Activated CD8-positive, alpha-beta memory T cell treated with anti-CD3 and anti-CD28 coated beads, Interleukin-2, amount 10 ng/mL, durations not matched to agents 7 days and 5 days (primary cell): ENCODE measurements at regions of chr16 and their contacts with region 1.

Region 1: GRCh38 chr16:28218104-28218503 is 6.3 kb upstream of the XPO6 start:
- DNase-seq: peak; percentile 73
- ATAC-seq: peak; percentile 99
- H3K4me3 Mint-ChIP-seq: no peak overlapping the region
- H3K27ac Mint-ChIP-seq: no peak overlapping the region
- H3K4me1 Mint-ChIP-seq: peaks cover 5% of the 10 kb centered on the region
- H3K27me3 Mint-ChIP-seq: no peaks in the 10 kb centered on the region

Region 2: GRCh38 chr16:27972500-27972899 is 245.6 kb before region 1 on chr16:
- CTCF ChIA-PET with region 1: interaction called, 10 read pairs
- DNase-seq: peak; percentile 74
- ATAC-seq: peak; percentile 93
- H3K4me3 Mint-ChIP-seq: no peak overlapping the region
- H3K27ac Mint-ChIP-seq: no peak overlapping the region
- H3K4me1 Mint-ChIP-seq: peaks cover 4% of the 10 kb centered on the region
- H3K27me3 Mint-ChIP-seq: peaks cover 26% of the 10 kb centered on the region

Region 3: GRCh38 chr16:28112883-28113282 is 105.2 kb before region 1 on chr16:
- CTCF ChIA-PET with region 1: interaction called, 16 read pairs
- DNase-seq: peak; percentile 69
- ATAC-seq: peak; percentile 91
- H3K4me3 Mint-ChIP-seq: no peak overlapping the region
- H3K27ac Mint-ChIP-seq: peak overlapping the region; percentile 78
- H3K4me1 Mint-ChIP-seq: peaks cover 32% of the 10 kb centered on the region
- H3K27me3 Mint-ChIP-seq: no peaks in the 10 kb centered on the region

Region 4: GRCh38 chr16:28130099-28131088 is 87.7 kb before region 1 on chr16:
- CTCF ChIA-PET with region 1: interaction called, 64 read pairs
- DNase-seq: no peak
- ATAC-seq: no peak
- H3K4me3 Mint-ChIP-seq: no peak overlapping the region
- H3K27ac Mint-ChIP-seq: peak overlapping the region; percentile 5
- H3K4me1 Mint-ChIP-seq: no peaks in the 10 kb centered on the region
- H3K27me3 Mint-ChIP-seq: no peaks in the 10 kb centered on the region

Region 5: DNA sequence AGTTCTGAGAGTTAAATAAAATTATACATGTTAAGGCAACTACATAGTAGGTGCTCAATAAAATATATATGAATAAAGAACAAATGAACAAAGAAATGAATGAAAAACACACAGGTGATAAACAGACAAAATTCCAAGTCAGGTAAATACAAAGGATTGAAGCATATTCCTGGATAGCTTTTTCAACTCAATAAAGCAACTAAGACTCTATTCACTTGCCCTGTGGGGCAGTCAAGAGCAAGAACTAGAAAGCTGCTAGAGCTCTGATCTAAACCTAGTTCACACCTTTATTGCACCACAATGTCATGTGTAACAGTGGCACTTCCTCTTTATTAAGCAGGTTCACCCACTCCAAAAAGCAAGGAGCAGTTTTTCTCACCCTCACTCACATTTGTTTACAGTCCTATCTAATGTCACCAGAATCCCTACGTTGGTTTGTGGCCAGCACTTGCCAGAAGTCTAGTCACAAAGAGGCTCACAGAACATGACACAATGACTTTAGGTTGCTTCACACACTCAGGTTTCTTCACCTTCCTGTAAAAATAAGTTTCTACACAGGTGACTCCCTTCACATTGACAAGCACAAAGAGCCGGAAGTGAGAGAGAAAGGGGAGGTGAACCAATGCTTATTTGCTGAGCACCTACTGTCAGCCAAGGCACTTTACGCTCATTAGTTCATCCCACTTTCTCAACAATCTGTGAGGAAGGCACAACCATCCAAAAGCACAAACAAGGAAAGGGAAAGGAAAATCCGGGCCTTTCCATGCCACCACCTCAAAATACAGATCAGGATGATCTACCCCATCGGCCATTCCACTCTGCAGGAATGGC is 77.1 kb before region 1 on chr16:
- CTCF ChIA-PET with region 1: interaction called, 64 read pairs
- DNase-seq: peak; percentile 92
- ATAC-seq: peak; percentile 73
- H3K4me3 Mint-ChIP-seq: peak overlapping the region; percentile 73
- H3K27ac Mint-ChIP-seq: peak overlapping the region; percentile 99
- H3K4me1 Mint-ChIP-seq: peaks cover 73% of the 10 kb centered on the region
- H3K27me3 Mint-ChIP-seq: no peaks in the 10 kb centered on the region